ENCODE measurements at regions of chr10 and their contacts with region 1.

Region 1: GRCh38 chr10:74826142-74827044 is at the start of gene KAT6B:
- DNase-seq: peak; percentile 99 to 100 (median 100)
- ATAC-seq: peak; percentile 76
- H3K4me3 ChIP-seq: peak within 1 kb of the TSS; percentile 84 to 95
- H3K4me3 Mint-ChIP-seq: peak within 1 kb of the TSS; percentile 92
- H3K27ac ChIP-seq: peak within 1 kb of the TSS; percentile 84 to 89
- H3K27ac Mint-ChIP-seq: peak within 1 kb of the TSS; percentile 97
- H3K4me1 ChIP-seq: peaks cover 40% of the 10 kb centered on the region
- H3K4me1 Mint-ChIP-seq: peaks cover 69% of the 10 kb centered on the region
- H3K27me3 ChIP-seq: no peaks in the 10 kb centered on the region
- H3K27me3 Mint-ChIP-seq: no peaks in the 10 kb centered on the region
- CTCF ChIP-seq: no peak
- total RNA-seq, gene KAT6B: 73.0 to 74.7 TPM

Region 2: DNA sequence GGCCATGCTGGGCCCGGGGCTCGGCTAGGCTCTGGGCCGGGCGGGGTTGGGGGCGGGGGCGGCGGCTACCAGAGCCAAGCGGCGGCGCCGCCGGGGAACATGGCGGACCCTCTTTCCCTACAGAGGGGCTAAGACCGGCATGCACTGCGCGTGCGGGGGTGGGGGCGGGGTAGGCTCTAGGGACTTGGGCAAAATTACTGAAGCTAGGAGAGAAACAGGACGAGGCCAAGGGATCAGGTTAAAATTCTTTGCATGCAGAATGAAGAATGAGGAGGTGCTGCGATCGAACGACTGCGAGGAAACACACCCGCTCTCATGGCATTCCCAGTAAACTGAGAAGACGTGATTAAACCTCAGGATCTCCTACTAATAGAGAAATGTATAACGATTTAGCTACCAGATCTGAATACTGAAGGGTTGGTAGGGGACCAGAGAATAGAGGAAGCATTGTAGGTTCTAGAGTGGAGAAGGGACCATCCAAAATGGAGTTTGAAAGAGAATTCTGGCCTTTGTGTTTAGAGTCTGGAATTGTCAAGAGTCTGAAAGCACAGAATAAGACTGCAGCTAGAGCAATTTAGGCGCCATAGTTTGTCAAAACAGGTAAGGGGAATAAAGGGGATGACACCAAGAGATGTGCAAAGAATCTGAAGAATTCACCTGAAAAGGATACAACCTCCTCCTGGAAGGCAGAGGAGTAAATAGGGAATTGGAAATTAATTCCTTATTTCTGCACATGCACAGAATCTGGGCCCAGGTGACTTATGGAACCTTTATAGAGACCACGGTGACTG is 1330.3 kb before region 1 on chr10 and contains the start of gene PPP3CB:
- CTCF ChIA-PET with region 1: no interaction called
- POLR2A ChIA-PET with region 1: no interaction called
- intact Hi-C with region 1: loop called in 1 of 2 experiments (anchors 5 kb)
- DNase-seq: peak; percentile 83 to 97 (median 89)
- ATAC-seq: peak; percentile 85
- H3K4me3 ChIP-seq: peak within 1 kb of the TSS; percentile 91 to 94
- H3K4me3 Mint-ChIP-seq: peak within 1 kb of the TSS; percentile 81
- H3K27ac ChIP-seq: peak within 1 kb of the TSS; percentile 87 to 93
- H3K27ac Mint-ChIP-seq: peak within 1 kb of the TSS; percentile 95
- H3K4me1 ChIP-seq: peaks cover 33% of the 10 kb centered on the region
- H3K4me1 Mint-ChIP-seq: peaks cover 49% of the 10 kb centered on the region
- H3K27me3 ChIP-seq: no peaks in the 10 kb centered on the region
- H3K27me3 Mint-ChIP-seq: no peaks in the 10 kb centered on the region
- CTCF ChIP-seq: no peak
- total RNA-seq, gene PPP3CB: 15.8 to 17.0 TPM

Region 3: DNA sequence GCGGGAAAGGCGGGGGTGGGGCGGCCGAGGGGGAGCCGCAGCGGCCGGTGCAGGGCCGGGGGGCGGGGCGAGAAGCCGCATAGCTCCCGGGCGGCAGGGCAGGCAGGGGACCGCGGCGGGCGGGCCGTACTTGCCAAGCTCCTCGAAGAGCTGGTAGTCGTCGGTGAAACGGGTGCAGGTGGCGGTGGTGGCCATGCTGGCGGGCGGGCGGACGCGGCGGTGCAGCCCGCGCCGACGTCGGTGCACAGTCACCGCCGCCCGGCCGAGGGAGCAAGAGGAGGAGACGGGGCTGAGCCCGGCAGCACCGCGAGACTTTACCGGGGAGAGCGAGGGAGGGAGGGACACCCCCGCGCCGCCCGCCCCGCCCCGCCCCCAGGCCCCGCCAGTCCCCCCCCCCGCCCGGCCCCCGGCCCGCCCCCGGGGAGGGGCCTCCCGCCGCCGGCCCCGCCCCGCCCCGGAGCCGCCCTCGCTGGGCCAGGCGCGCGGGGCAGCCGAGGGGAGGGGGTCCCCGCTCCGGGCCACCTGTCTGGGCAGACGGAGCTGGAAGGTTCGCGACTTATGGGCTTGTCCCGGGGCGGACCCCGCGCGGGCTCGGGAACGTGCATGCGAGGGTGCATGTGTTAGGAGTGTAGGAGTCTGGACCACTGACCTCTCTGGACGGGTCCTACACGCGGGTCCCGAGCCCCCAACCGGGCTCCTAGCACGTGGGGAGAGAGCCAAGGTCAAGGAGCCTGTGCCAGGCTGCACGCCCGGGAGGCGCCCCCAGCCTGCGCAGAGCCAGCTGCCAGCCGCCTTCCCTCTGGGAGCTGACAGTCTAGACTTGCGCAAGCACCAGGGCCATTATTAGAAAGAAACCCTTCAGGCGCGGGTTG is 951.9 kb before region 1 on chr10 and contains the start of gene CAMK2G:
- CTCF ChIA-PET with region 1: no interaction called
- POLR2A ChIA-PET with region 1: no interaction called
- intact Hi-C with region 1: loop called (anchors 2 to 10 kb)
- DNase-seq: peak; percentile 55 to 93 (median 81)
- ATAC-seq: peak; percentile 72
- H3K4me3 ChIP-seq: peak within 1 kb of the TSS; percentile 93 to 95
- H3K4me3 Mint-ChIP-seq: peak within 1 kb of the TSS; percentile 87
- H3K27ac ChIP-seq: peak within 1 kb of the TSS; percentile 57 to 82
- H3K27ac Mint-ChIP-seq: peak within 1 kb of the TSS; percentile 90
- H3K4me1 ChIP-seq: peaks cover 60% of the 10 kb centered on the region
- H3K4me1 Mint-ChIP-seq: peaks cover 75% of the 10 kb centered on the region
- H3K27me3 ChIP-seq: no peaks in the 10 kb centered on the region
- H3K27me3 Mint-ChIP-seq: no peaks in the 10 kb centered on the region
- CTCF ChIP-seq: no peak
- total RNA-seq, gene CAMK2G: 28.4 to 28.9 TPM

Region 4: GRCh38 chr10:74176380-74177139 is 649.8 kb before region 1 on chr10:
- CTCF ChIA-PET with region 1: no interaction called
- POLR2A ChIA-PET with region 1: no interaction called
- intact Hi-C with region 1: loop called (anchors 1 to 10 kb)
- DNase-seq: peak; percentile 89 to 99 (median 96)
- ATAC-seq: peak; percentile 93
- H3K4me3 ChIP-seq: peak overlapping the region; percentile 89 to 91
- H3K4me3 Mint-ChIP-seq: peak overlapping the region; percentile 93
- H3K27ac ChIP-seq: peak overlapping the region; percentile 85 to 89
- H3K27ac Mint-ChIP-seq: peak overlapping the region; percentile 97
- H3K4me1 ChIP-seq: peaks cover 34% of the 10 kb centered on the region
- H3K4me1 Mint-ChIP-seq: peaks cover 42% of the 10 kb centered on the region
- H3K27me3 ChIP-seq: no peaks in the 10 kb centered on the region
- H3K27me3 Mint-ChIP-seq: no peaks in the 10 kb centered on the region
- CTCF ChIP-seq: no peak

Region 5: DNA sequence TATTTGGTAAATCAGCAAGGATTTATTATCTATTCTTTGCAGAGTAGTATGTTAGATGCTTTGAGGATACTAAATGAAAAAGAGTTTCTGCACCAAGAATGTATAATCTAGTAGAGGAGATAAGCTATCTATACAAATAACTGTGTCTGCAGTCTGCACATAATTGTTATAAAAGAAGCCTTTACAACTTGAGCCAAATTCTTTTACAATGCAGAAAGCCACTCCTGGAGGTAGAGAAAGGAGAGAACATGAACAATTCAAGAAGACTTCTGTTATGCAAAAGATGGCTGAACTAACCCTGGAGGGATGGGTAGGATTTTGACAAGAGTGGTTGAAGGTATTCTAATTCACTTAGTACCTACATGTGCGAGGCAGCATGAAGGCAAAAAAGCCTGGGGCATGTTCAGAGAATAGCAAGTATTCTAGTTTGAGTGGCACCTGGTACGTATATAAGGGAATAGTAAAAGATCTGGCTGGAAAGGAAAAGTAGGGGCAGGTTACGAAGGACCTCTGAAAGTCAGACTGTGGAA is 251.1 kb before region 1 on chr10:
- CTCF ChIA-PET with region 1: no interaction called
- POLR2A ChIA-PET with region 1: no interaction called
- intact Hi-C with region 1: no loop called
- DNase-seq: no peak
- ATAC-seq: no peak
- H3K4me3 ChIP-seq: no peak overlapping the region
- H3K4me3 Mint-ChIP-seq: no peak overlapping the region
- H3K27ac ChIP-seq: no peak overlapping the region
- H3K27ac Mint-ChIP-seq: no peak overlapping the region
- H3K4me1 ChIP-seq: no peaks in the 10 kb centered on the region
- H3K4me1 Mint-ChIP-seq: no peaks in the 10 kb centered on the region
- H3K27me3 ChIP-seq: no peaks in the 10 kb centered on the region
- H3K27me3 Mint-ChIP-seq: no peaks in the 10 kb centered on the region
- CTCF ChIP-seq: no peak

Region 6: DNA sequence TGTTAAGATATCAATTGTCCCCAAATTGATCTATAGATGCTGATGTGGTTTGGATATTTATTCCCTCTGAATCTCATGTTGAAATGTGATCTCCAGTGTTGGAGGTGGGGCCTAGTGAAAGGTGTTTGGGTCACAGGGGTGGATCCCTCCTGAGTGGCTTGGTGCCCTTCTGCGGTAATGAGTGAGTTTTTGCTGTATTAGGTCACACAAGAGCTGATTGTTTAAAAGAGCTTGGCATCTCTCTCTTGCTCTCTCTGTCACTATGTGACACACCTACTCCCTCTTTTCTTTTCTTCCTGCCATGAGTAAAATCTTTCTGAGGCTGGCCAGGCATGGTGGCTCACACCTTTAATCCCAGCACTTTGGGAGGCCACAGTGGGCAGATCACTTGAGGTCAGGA is 98.2 kb before region 1 on chr10:
- CTCF ChIA-PET with region 1: no interaction called
- POLR2A ChIA-PET with region 1: no interaction called
- intact Hi-C with region 1: no loop called
- DNase-seq: no peak
- ATAC-seq: no peak
- H3K4me3 ChIP-seq: no peak overlapping the region
- H3K4me3 Mint-ChIP-seq: no peak overlapping the region
- H3K27ac ChIP-seq: no peak overlapping the region
- H3K27ac Mint-ChIP-seq: no peak overlapping the region
- H3K4me1 ChIP-seq: no peaks in the 10 kb centered on the region
- H3K4me1 Mint-ChIP-seq: no peaks in the 10 kb centered on the region
- H3K27me3 ChIP-seq: no peaks in the 10 kb centered on the region
- H3K27me3 Mint-ChIP-seq: no peaks in the 10 kb centered on the region
- CTCF ChIP-seq: no peak

Region 7: GRCh38 chr10:74753442-74754211 is 72.8 kb before region 1 on chr10:
- CTCF ChIA-PET with region 1: no interaction called
- POLR2A ChIA-PET with region 1: no interaction called
- intact Hi-C with region 1: loop called in 1 of 2 experiments (anchors 10 kb)
- DNase-seq: no peak
- ATAC-seq: no peak
- H3K4me3 ChIP-seq: no peak overlapping the region
- H3K4me3 Mint-ChIP-seq: no peak overlapping the region
- H3K27ac ChIP-seq: no peak overlapping the region
- H3K27ac Mint-ChIP-seq: no peak overlapping the region
- H3K4me1 ChIP-seq: peaks cover 11% of the 10 kb centered on the region
- H3K4me1 Mint-ChIP-seq: peaks cover 7% of the 10 kb centered on the region
- H3K27me3 ChIP-seq: no peaks in the 10 kb centered on the region
- H3K27me3 Mint-ChIP-seq: no peaks in the 10 kb centered on the region
- CTCF ChIP-seq: no peak

Region 8: GRCh38 chr10:75019370-75019769 is 193.0 kb after region 1 on chr10:
- CTCF ChIA-PET with region 1: no interaction called
- POLR2A ChIA-PET with region 1: no interaction called
- intact Hi-C with region 1: loop called in 1 of 2 experiments (anchors 5 kb)
- DNase-seq: peak in 2 of 9 experiments; percentile 55 to 67
- ATAC-seq: peak; percentile 58
- H3K4me3 ChIP-seq: no peak overlapping the region
- H3K4me3 Mint-ChIP-seq: no peak overlapping the region
- H3K27ac ChIP-seq: no peak overlapping the region
- H3K27ac Mint-ChIP-seq: no peak overlapping the region
- H3K4me1 ChIP-seq: peaks cover 15% of the 10 kb centered on the region
- H3K4me1 Mint-ChIP-seq: peaks cover 27% of the 10 kb centered on the region
- H3K27me3 ChIP-seq: no peaks in the 10 kb centered on the region
- H3K27me3 Mint-ChIP-seq: no peaks in the 10 kb centered on the region
- CTCF ChIP-seq: peak; percentile 44